ENCODE measurements at regions of chr17 and their contacts with region 1.

Region 1: DNA sequence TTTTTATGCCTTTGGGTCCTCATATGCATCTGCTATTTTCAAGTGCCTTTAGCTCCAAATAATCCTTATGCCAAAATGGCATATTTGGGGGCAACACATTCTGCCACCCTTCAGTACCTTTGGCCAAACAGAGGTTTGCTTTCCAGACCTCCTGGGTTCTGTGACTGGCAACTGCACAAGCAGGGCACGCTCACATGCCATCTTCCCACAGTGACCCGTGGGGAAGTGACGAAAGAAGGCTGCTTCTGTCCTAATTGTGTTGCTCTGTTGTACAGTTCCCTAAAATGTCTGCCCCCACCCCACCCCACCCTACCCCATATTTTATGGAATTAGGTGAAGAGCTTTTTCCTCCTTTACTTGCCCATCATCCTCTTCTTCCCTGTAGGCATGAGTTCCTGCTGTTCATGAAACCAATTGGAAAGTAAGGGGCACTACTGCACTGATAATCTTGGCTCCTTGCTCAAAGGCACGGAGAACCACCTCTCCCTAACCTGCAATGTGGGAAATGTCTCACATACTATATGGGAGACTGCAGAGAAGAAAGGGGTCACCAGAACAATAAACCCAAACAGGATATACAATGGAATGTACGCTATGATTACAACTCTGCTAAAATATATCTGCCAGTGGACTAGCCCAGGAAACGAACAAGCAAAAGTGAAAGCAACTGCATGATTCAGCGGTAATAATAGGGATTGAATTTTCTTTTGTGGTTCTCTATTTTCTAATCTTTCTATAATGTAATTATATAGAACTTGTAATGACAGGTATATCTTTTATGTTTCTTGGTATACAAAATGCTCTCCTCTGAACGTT is 3.3 kb upstream of the SLFN12L start:
- DNase-seq: no peak
- H3K4me3 ChIP-seq: peak overlapping the region; percentile 26 to 60 (median 31)
- H3K27ac ChIP-seq: peak overlapping the region; percentile 12 to 82
- H3K4me1 ChIP-seq: no peaks in the 10 kb centered on the region
- H3K27me3 ChIP-seq: no peaks in the 10 kb centered on the region
- CTCF ChIP-seq: no peak
- POLR2A ChIP-seq: no peak

Region 2: DNA sequence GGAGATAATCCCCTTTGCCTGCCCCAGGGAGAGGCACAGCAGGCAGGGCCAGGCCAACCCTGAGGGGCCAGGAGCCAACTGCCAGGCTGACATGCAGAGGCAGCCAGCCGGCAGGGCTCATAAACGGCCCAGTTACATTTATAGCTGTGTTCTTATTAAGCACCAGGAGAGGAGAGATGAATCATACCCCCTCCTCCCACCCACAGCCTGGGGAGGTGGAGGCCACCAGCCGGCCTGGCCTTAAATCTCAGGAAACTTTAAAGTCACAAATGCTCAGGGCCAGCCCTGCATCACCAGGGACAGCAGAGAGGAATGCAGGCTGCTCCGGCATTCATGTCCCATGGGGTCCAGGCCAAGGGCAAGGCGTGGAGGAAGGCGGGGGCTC is 784.2 kb before region 1 on chr17:
- intact Hi-C with region 1: loop called (anchors 10 kb)
- DNase-seq: no peak
- H3K4me3 ChIP-seq: no peak overlapping the region
- H3K27ac ChIP-seq: no peak overlapping the region
- H3K4me1 ChIP-seq: no peaks in the 10 kb centered on the region
- H3K27me3 ChIP-seq: no peaks in the 10 kb centered on the region
- CTCF ChIP-seq: no peak
- POLR2A ChIP-seq: no peak